ENCODE measurements at regions of chr1 and their contacts with region 1.

Region 1: GRCh38 chr1:10209905-10210810 is at the start of gene KIF1B:
- DNase-seq: peak; percentile 96 to 100 (median 99)

Region 2: DNA sequence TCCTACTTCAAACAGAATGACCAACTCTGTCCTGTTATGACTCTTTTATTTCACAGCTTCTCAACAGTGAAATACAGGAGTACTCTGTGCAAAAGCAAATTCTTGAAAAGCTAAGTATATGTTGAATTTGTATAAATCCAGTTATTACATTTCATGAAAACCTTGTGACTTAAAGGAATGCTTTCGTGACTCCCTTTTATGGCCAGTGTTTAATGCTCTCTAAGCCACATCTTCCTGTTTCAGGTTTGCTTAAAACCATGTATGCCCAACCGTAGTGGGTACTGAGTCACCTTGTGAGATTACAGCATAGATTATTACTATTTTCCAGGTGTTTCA is 40.0 kb before region 1 on chr1:
- intact Hi-C with region 1: no loop called
- DNase-seq: no peak

Region 3: GRCh38 chr1:10283318-10283984 is 73.3 kb after region 1 on chr1:
- intact Hi-C with region 1: loop called (anchors 10 kb)
- DNase-seq: peak in 20 of 42 donors; percentile 19 to 74 (median 40)

Region 4: GRCh38 chr1:10338047-10338446 is 127.9 kb after region 1 on chr1:
- intact Hi-C with region 1: loop called (anchors 2 kb)
- DNase-seq: peak; percentile 43 to 91 (median 75)

Measured in head of caudate nucleus (tissue), 42 donors.